Breast epithelium (tissue), 4 donors: ENCODE measurements at regions of chr1 and their contacts with region 1.

Region 1: GRCh38 chr1:177020851-177021589 is 143.5 kb downstream of the ASTN1 start:
- DNase-seq: no peak
- H3K4me3 ChIP-seq: no peak overlapping the region
- H3K27ac ChIP-seq: no peak overlapping the region
- H3K4me1 ChIP-seq: no peaks in the 10 kb centered on the region
- H3K27me3 ChIP-seq: no peaks in the 10 kb centered on the region
- CTCF ChIP-seq: no peak
- POLR2A ChIP-seq: no peak

Region 2: DNA sequence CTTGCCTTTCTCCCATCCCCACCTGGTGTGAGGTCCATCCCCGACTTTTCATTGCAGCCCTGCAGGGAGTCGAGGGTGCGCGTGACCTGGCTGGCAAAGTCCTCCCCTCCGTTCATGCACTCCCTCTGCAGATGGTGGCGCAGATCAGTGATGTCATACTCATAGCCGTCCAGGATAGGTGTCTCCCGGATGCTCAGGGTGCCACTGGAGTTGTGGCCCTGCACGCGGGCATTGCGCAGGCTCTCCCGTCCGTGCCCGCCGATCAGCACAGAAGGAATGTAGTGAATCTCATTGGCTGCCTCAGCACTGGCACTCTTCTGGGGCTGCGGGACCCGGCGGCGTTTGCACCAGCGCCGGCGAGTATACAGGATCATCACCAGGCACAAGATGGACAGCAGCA is 11.4 kb after region 1 on chr1:
- intact Hi-C with region 1: loop called (anchors 1 kb)
- DNase-seq: no peak
- H3K4me3 ChIP-seq: no peak overlapping the region
- H3K27ac ChIP-seq: no peak overlapping the region
- H3K4me1 ChIP-seq: no peaks in the 10 kb centered on the region
- H3K27me3 ChIP-seq: no peaks in the 10 kb centered on the region
- CTCF ChIP-seq: no peak
- POLR2A ChIP-seq: no peak

Region 3: GRCh38 chr1:177106614-177107354 is 85.8 kb after region 1 on chr1:
- intact Hi-C with region 1: no loop called
- DNase-seq: no peak
- H3K4me3 ChIP-seq: no peak overlapping the region
- H3K27ac ChIP-seq: no peak overlapping the region
- H3K4me1 ChIP-seq: no peaks in the 10 kb centered on the region
- H3K27me3 ChIP-seq: no peaks in the 10 kb centered on the region
- CTCF ChIP-seq: no peak
- POLR2A ChIP-seq: no peak